Endothelial cell of umbilical vein (primary cell): ENCODE measurements at regions of chr1 and their contacts with region 1.

Region 1: GRCh38 chr1:2545759-2546514 is 10.2 kb upstream of the TNFRSF14 start:
- DNase-seq: peak; percentile 84
- H3K4me3 ChIP-seq: peak overlapping the region; percentile 51 to 74 (median 67)
- H3K27ac ChIP-seq: peak overlapping the region; percentile 80
- H3K4me1 ChIP-seq: peaks cover 27% of the 10 kb centered on the region
- H3K27me3 ChIP-seq: peaks cover 0 to 1% of the 10 kb centered on the region in 2 experiments
- CTCF ChIP-seq: no peak
- POLR2A ChIP-seq: peak; percentile 78

Region 2: GRCh38 chr1:2189459-2190425 is 356.2 kb before region 1 on chr1:
- CTCF ChIA-PET with region 1: interaction called, 8 read pairs
- POLR2A ChIA-PET with region 1: no interaction called
- dilution Hi-C with region 1: no loop called
- intact Hi-C with region 1: loop called (anchors 1 kb)
- DNase-seq: peak; percentile 96
- H3K4me3 ChIP-seq: peak overlapping the region; percentile 39 to 54 (median 39)
- H3K27ac ChIP-seq: peak overlapping the region; percentile 78
- H3K4me1 ChIP-seq: peaks cover 18% of the 10 kb centered on the region
- H3K27me3 ChIP-seq: no peaks in the 10 kb centered on the region
- CTCF ChIP-seq: no peak
- POLR2A ChIP-seq: peak; percentile 78

Region 3: DNA sequence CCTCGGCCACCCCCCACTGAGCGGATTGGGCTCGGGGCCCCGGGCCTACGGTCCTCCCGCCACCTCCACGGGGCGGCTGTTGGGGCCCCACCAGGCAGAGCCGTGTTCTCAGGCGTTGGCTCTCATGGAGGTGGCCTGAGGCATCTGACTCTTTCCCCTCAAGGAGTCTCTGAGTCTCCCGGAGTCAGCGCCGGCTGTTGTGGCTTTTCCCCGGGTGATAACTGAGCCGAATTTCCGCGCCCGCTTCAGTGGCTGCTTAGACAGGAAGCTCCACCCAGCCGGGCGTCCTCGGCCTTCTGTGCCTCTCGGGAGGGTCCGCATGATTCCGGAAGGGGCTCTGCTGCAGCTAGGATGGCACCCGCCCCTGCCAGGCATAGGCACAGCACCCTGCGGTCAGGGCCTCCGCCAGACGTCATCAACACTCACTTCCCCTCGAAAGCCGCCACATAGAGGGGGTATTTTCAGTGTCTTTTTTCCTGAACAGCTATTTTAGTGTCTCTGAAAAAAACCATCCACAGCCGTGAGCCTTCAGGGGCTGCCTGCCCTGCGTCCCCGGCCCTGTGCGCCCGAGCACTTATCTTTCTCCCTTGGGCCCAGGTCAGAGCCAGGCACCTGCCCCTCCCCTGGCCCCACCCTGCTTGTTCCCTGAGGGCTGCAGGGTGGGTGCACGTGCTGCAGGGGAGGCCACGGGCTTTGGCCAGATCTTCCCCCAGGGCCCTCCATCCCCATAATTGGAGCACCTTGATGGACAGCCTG is 244.9 kb before region 1 on chr1:
- CTCF ChIA-PET with region 1: no interaction called
- POLR2A ChIA-PET with region 1: no interaction called
- dilution Hi-C with region 1: no loop called
- intact Hi-C with region 1: no loop called
- DNase-seq: peak; percentile 62
- H3K4me3 ChIP-seq: no peak overlapping the region
- H3K27ac ChIP-seq: peak overlapping the region; percentile 83
- H3K4me1 ChIP-seq: peaks cover 27% of the 10 kb centered on the region
- H3K27me3 ChIP-seq: no peaks in the 10 kb centered on the region
- CTCF ChIP-seq: no peak
- POLR2A ChIP-seq: peak; percentile 21

Region 4: GRCh38 chr1:2451744-2452143 is 94.2 kb before region 1 on chr1:
- CTCF ChIA-PET with region 1: interaction called, 4 read pairs
- POLR2A ChIA-PET with region 1: interaction called, 3 read pairs
- dilution Hi-C with region 1: no loop called
- intact Hi-C with region 1: loop called (anchors 2 kb)
- DNase-seq: peak; percentile 75
- H3K4me3 ChIP-seq: no peak overlapping the region
- H3K27ac ChIP-seq: peak overlapping the region; percentile 90
- H3K4me1 ChIP-seq: peaks cover 27% of the 10 kb centered on the region
- H3K27me3 ChIP-seq: no peaks in the 10 kb centered on the region
- CTCF ChIP-seq: no peak
- POLR2A ChIP-seq: peak; percentile 41

Region 5: GRCh38 chr1:2580691-2581090 is 34.8 kb after region 1 on chr1:
- CTCF ChIA-PET with region 1: interaction called, 4 read pairs
- POLR2A ChIA-PET with region 1: no interaction called
- dilution Hi-C with region 1: no loop called
- intact Hi-C with region 1: loop called (anchors 1 kb)
- DNase-seq: no peak
- H3K4me3 ChIP-seq: no peak overlapping the region
- H3K27ac ChIP-seq: peak overlapping the region; percentile 86
- H3K4me1 ChIP-seq: peaks cover 34% of the 10 kb centered on the region
- H3K27me3 ChIP-seq: no peaks in the 10 kb centered on the region
- CTCF ChIP-seq: no peak
- POLR2A ChIP-seq: no peak

Region 6: GRCh38 chr1:2642560-2643413 is 96.8 kb after region 1 on chr1:
- CTCF ChIA-PET with region 1: no interaction called
- POLR2A ChIA-PET with region 1: no interaction called
- dilution Hi-C with region 1: no loop called
- intact Hi-C with region 1: loop called (anchors 2 kb)
- DNase-seq: peak; percentile 89
- H3K4me3 ChIP-seq: peak overlapping the region; percentile 55 to 87 (median 60)
- H3K27ac ChIP-seq: peak overlapping the region; percentile 79
- H3K4me1 ChIP-seq: peaks cover 8% of the 10 kb centered on the region
- H3K27me3 ChIP-seq: no peaks in the 10 kb centered on the region
- CTCF ChIP-seq: peak in 1 of 2 donors; percentile 21
- POLR2A ChIP-seq: peak; percentile 68